AG04449 (cell line): ENCODE measurements at regions of chr1 and their contacts with region 1.

Region 1: GRCh38 chr1:154609398-154610380 is 1.7 kb upstream of the ADAR start:
- DNase-seq: no peak
- H3K4me3 ChIP-seq: no peak overlapping the region
- CTCF ChIP-seq: no peak

Region 2: DNA sequence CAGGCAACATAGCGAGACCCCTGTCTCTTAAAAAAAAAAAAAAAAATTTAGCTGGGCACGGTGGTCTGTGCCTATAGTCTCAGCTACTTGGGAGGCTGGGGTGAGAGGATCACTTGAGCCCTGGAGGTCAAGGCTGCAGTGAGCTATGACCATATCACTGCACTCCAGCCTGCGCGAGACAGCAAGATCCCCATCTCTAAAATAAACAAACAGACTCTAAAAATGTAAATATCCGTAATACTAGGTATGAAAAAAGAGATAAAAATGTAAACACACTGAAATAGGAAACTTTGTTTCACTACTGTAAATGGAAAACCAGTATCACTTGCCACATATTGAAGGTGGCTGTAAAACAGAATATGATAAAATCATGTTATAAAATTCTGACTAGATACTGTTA is 18.9 kb before region 1 on chr1:
- CTCF ChIA-PET with region 1: interaction called, 10 read pairs
- POLR2A ChIA-PET with region 1: interaction called, 3 read pairs
- DNase-seq: no peak
- H3K4me3 ChIP-seq: no peak overlapping the region
- CTCF ChIP-seq: no peak

Region 3: DNA sequence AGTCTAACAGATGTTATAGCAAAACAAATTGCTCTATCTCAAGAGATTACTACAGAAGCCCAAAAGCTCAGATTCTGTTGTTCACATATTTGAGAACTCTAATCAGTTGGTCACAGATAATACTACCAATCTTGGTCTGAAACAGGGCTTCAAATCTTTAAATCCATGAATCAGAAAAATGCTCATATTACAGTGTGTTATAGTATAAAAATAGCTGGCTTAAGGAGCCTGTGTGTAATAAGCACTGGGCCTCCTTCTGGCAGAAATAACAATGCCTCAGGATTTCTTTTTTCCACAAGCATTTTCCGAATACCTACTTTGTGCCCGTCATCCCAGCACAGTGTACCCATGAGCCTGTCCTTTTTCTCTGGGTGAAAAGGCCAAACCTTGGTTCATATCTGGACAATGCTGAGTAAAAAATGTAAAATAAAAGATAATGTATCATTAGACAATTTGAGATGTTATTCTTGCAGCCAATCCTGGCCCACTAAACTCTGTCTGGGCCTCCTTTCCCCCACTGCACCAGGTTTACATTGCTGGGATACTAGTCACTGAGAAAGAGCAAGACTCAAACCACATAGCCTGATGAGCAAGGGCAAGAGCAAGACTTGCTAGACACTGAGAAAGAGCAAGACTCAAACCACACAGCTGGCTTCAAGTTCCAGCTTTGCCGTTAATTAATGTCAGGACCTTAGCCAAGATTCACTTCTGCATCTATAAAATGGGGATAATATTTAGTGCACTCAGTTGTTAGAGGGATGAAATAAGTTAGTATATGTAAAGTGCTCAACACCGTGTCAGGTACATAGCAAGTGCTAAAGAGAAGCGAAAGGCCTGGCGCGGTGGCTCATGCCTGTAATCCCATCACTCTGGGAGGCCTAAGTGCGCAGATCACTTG is 15.3 kb after region 1 on chr1:
- CTCF ChIA-PET with region 1: interaction called, 17 read pairs
- POLR2A ChIA-PET with region 1: interaction called, 3 read pairs
- DNase-seq: peak; percentile 78
- H3K4me3 ChIP-seq: no peak overlapping the region
- CTCF ChIP-seq: no peak